ENCODE measurements at regions of chr7 and their contacts with region 1.

Region 1: GRCh38 chr7:43834463-43835251 is 34.7 kb downstream of the MRPS24 start:
- DNase-seq: peak in 10 of 14 experiments; percentile 4 to 82 (median 12)
- ATAC-seq: peak; percentile 56
- H3K4me3 ChIP-seq: peak overlapping the region; percentile 68
- H3K4me3 Mint-ChIP-seq: peak overlapping the region; percentile 94
- H3K27ac ChIP-seq: peak overlapping the region in 1 of 2 donors; percentile 76
- H3K27ac Mint-ChIP-seq: peak overlapping the region; percentile 93
- H3K4me1 ChIP-seq: peaks cover 29% of the 10 kb centered on the region
- H3K4me1 Mint-ChIP-seq: peaks cover 26% of the 10 kb centered on the region
- H3K27me3 ChIP-seq: no peaks in the 10 kb centered on the region
- H3K27me3 Mint-ChIP-seq: peaks cover 3% of the 10 kb centered on the region
- CTCF ChIP-seq: no peak

Region 2: GRCh38 chr7:41940760-41941343 is 1893.8 kb before region 1 on chr7:
- CTCF ChIA-PET with region 1: interaction called, 8 read pairs
- POLR2A ChIA-PET with region 1: no interaction called
- intact Hi-C with region 1: loop called in 1 of 2 experiments (anchors 1 kb)
- DNase-seq: peak; percentile 7 to 73 (median 26)
- ATAC-seq: peak; percentile 71
- H3K4me3 ChIP-seq: no peak overlapping the region
- H3K4me3 Mint-ChIP-seq: no peak overlapping the region
- H3K27ac ChIP-seq: no peak overlapping the region
- H3K27ac Mint-ChIP-seq: no peak overlapping the region
- H3K4me1 ChIP-seq: peaks cover 10% of the 10 kb centered on the region
- H3K4me1 Mint-ChIP-seq: peaks cover 9% of the 10 kb centered on the region
- H3K27me3 ChIP-seq: peaks cover 0 to 8% of the 10 kb centered on the region in 2 experiments
- H3K27me3 Mint-ChIP-seq: peaks cover 48% of the 10 kb centered on the region
- CTCF ChIP-seq: peak; percentile 79

Region 3: DNA sequence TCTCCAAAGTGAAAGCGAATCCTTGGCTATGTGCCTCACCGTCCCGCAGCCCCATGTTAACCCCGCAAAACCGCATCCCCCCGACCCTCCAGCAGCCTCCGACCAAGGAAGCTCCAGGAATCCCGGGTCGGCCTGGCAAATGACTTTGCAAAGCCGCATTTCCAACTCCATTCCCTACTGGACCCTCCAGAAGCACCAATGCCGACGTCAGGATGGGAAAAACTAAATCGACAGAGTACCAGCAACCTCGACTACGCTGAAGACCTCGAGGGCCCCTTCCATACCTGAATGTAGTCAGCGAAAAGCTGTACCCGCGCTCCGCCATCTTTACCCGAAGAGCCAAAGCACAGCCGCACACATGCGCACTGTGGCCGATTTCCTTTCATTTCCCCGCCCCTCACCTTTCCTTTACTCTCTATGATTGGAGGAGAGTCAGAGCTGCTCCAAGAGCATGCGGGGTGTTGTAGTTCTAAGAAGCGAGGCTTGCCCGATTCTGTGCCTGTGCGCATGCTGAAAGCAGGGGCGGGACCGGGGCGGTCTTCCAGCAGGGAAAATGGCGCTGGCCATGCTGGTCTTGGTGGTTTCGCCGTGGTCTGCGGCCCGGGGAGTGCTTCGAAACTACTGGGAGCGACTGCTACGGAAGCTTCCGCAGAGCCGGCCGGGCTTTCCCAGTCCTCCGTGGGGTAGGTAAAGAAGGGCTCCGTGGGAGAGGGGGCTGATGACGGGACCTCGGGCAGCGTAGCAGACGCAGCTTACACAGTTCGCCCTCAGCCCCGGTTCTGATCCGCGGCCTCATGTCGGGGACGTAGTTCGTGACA is 902.6 kb before region 1 on chr7 and contains the starts of genes MRPL32 and PSMA2:
- CTCF ChIA-PET with region 1: no interaction called
- POLR2A ChIA-PET with region 1: interaction called, 15 read pairs
- intact Hi-C with region 1: no loop called
- DNase-seq: peak; percentile 88 to 98 (median 91)
- ATAC-seq: peak; percentile 98
- H3K4me3 ChIP-seq: peak within 1 kb of the TSS; percentile 87
- H3K4me3 Mint-ChIP-seq: peak within 1 kb of the TSS; percentile 92
- H3K27ac ChIP-seq: peak within 1 kb of the TSS; percentile 74 to 87
- H3K27ac Mint-ChIP-seq: peak within 1 kb of the TSS; percentile 92
- H3K4me1 ChIP-seq: peaks cover 28% of the 10 kb centered on the region
- H3K4me1 Mint-ChIP-seq: peaks cover 79% of the 10 kb centered on the region
- H3K27me3 ChIP-seq: no peaks in the 10 kb centered on the region
- H3K27me3 Mint-ChIP-seq: no peaks in the 10 kb centered on the region
- CTCF ChIP-seq: no peak
- total RNA-seq, gene MRPL32: 57.1 to 60.7 TPM
- total RNA-seq, gene PSMA2: 38.8 to 41.0 TPM

Region 4: DNA sequence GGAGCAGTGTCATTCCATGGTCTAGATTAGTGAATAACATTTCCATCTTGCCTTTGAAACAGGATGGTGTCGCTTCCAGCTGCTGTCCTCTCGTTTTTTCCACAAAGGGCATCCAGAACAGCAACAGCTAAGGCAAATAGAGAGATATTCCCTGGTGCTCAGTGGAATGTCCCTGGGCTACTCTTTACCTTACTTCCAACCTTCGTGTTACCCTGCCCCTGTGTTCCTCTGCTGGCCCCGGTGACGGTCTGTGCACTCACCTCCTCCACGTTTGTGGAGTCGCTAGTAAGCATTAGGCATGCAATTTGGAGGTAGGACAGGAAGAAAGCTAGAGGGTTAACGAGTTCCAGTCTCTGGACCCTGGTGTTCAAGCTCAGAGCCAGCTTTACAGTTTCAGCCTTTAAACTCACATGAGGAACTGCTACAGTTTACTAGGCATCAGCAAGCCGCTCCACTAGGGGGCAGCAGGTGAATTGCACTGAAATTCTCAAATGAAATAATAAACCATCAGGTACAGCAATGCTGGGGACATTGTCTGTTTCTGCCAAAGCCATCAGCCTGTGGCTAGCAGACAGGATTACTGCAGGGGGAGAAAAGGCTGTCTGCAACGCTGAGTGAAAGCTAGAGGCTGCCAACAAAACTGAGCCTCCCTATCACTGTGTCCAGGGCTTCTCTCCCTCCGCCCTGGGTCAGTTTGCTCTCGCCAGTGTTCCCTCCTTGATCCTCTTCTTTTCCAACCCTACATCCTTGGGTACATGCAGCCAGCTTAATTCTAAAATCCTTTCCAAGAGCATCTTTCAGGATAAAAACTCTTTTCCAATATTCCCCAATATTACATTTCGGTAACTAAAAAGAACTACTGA is 893.4 kb before region 1 on chr7:
- CTCF ChIA-PET with region 1: interaction called, 6 read pairs
- POLR2A ChIA-PET with region 1: interaction called, 3 read pairs
- intact Hi-C with region 1: loop called (anchors 1 to 2 kb)
- DNase-seq: peak; percentile 58 to 80 (median 71)
- ATAC-seq: peak; percentile 72
- H3K4me3 ChIP-seq: no peak overlapping the region
- H3K4me3 Mint-ChIP-seq: no peak overlapping the region
- H3K27ac ChIP-seq: no peak overlapping the region
- H3K27ac Mint-ChIP-seq: no peak overlapping the region
- H3K4me1 ChIP-seq: peaks cover 4% of the 10 kb centered on the region
- H3K4me1 Mint-ChIP-seq: peaks cover 4% of the 10 kb centered on the region
- H3K27me3 ChIP-seq: no peaks in the 10 kb centered on the region
- H3K27me3 Mint-ChIP-seq: no peaks in the 10 kb centered on the region
- CTCF ChIP-seq: peak; percentile 87

Region 5: DNA sequence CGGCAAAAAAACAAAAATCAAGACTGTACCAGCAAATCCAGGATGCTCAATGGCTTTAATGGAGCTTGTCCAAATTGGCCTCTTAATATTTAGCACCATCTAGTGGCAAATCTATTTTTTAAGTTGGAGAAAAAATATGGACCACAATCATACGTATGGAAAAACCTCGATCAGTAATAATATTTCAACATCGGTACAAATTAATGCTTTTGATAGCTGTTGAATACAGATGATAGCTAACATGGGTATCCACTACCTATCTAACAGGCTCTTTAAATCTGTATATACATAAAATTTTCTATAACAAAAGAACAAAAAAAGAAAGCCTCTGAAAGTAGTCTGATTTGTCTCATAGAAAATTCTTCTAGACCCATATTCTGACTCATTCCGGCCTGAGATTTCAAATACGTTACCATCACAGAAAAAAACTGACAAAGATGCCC is 134.6 kb before region 1 on chr7:
- CTCF ChIA-PET with region 1: interaction called, 9 read pairs
- POLR2A ChIA-PET with region 1: interaction called, 3 read pairs
- intact Hi-C with region 1: loop called in 1 of 2 experiments (anchors 1 kb)
- DNase-seq: peak in 3 of 14 experiments; percentile 77 to 80 (median 80)
- ATAC-seq: peak; percentile 76
- H3K4me3 ChIP-seq: no peak overlapping the region
- H3K4me3 Mint-ChIP-seq: peak overlapping the region; percentile 52
- H3K27ac ChIP-seq: peak overlapping the region in 1 of 2 donors; percentile 4
- H3K27ac Mint-ChIP-seq: peak overlapping the region; percentile 66
- H3K4me1 ChIP-seq: peaks cover 6% of the 10 kb centered on the region
- H3K4me1 Mint-ChIP-seq: peaks cover 58% of the 10 kb centered on the region
- H3K27me3 ChIP-seq: no peaks in the 10 kb centered on the region
- H3K27me3 Mint-ChIP-seq: no peaks in the 10 kb centered on the region
- CTCF ChIP-seq: peak; percentile 83

Region 6: DNA sequence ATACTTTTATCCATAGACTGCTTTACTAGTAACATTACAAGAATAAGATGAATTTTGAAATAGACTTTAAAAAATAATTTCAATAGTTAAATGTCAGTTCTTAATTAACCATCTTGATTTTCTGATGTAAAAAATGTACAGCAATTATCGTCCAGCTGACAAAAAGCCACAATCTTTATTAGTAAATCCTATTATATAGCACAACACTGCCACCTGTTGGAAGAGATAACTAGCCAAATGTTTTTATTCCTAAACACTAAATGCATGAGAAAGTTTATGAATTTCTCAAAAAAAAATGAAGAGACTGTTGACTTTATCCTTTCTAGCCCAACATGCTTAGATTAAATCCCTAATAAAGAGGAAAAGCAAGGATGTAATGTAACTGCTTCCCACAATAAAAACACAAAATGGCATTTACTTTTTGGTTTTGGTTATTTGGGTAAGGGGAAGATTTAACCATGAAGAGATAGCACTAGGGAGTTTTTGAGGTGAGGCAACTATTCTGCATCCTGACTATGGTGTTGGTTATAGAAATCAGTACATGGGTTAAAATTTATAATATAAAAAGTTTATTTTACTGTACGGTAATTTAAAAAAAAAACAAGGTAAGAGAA is 113.4 kb before region 1 on chr7:
- CTCF ChIA-PET with region 1: interaction called, 3 read pairs
- POLR2A ChIA-PET with region 1: no interaction called
- intact Hi-C with region 1: loop called (anchors 2 to 5 kb)
- DNase-seq: peak in 4 of 14 experiments; percentile 25 to 78 (median 74)
- ATAC-seq: peak; percentile 48
- H3K4me3 ChIP-seq: no peak overlapping the region
- H3K4me3 Mint-ChIP-seq: no peak overlapping the region
- H3K27ac ChIP-seq: no peak overlapping the region
- H3K27ac Mint-ChIP-seq: peak overlapping the region; percentile 0
- H3K4me1 ChIP-seq: peaks cover 8% of the 10 kb centered on the region
- H3K4me1 Mint-ChIP-seq: peaks cover 71% of the 10 kb centered on the region
- H3K27me3 ChIP-seq: no peaks in the 10 kb centered on the region
- H3K27me3 Mint-ChIP-seq: no peaks in the 10 kb centered on the region
- CTCF ChIP-seq: peak; percentile 96

Region 7: DNA sequence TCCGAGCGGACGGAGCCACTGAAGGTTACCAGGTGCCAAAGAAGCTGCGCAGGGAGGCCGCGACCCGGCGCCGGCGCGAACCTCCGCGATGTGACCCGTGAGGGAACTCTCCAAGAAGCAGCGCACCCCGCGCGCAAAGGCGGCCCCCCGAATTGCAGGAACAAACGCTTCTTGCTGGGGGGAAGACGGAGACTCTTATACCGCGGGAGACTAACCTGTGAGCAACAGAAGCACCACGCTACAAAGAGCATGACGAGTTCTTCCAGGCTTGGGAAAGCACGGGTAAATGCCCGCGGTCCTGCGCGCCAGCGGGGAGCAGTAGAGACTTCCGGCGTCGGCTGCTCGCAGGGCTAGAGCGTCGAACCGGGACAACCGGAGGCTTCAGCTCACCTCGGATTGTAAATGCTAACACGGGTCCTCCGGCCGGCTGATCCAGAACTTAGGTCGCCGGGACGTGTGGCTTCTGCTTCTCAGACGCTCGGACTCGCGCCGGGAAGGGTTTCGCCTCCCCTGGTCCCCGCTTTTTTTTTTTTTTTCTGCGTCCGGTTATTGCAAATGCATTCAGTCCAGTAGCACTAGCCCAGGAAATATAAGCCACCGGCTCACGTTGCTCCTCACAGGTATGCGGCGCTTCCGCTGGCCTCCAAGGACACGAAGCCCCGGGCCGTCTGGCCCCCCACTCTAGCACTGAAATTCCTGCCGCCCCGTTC is 105.3 kb before region 1 on chr7 and contains the start of gene COA1:
- CTCF ChIA-PET with region 1: interaction called, 10 read pairs
- POLR2A ChIA-PET with region 1: interaction called, 7 read pairs
- intact Hi-C with region 1: loop called in 1 of 2 experiments (anchors 5 kb)
- DNase-seq: peak; percentile 68 to 94 (median 74)
- ATAC-seq: peak; percentile 93
- H3K4me3 ChIP-seq: peak within 1 kb of the TSS; percentile 98
- H3K4me3 Mint-ChIP-seq: peak within 1 kb of the TSS; percentile 96
- H3K27ac ChIP-seq: peak within 1 kb of the TSS; percentile 75
- H3K27ac Mint-ChIP-seq: peak within 1 kb of the TSS; percentile 91
- H3K4me1 ChIP-seq: peaks cover 24% of the 10 kb centered on the region
- H3K4me1 Mint-ChIP-seq: peaks cover 55% of the 10 kb centered on the region
- H3K27me3 ChIP-seq: no peaks in the 10 kb centered on the region
- H3K27me3 Mint-ChIP-seq: no peaks in the 10 kb centered on the region
- CTCF ChIP-seq: no peak
- total RNA-seq, gene COA1: 78.9 to 80.7 TPM

Measured in CD4-positive, alpha-beta T cell (primary cell).